ENCODE measurements at regions of chr6 and their contacts with region 1.

Region 1: DNA sequence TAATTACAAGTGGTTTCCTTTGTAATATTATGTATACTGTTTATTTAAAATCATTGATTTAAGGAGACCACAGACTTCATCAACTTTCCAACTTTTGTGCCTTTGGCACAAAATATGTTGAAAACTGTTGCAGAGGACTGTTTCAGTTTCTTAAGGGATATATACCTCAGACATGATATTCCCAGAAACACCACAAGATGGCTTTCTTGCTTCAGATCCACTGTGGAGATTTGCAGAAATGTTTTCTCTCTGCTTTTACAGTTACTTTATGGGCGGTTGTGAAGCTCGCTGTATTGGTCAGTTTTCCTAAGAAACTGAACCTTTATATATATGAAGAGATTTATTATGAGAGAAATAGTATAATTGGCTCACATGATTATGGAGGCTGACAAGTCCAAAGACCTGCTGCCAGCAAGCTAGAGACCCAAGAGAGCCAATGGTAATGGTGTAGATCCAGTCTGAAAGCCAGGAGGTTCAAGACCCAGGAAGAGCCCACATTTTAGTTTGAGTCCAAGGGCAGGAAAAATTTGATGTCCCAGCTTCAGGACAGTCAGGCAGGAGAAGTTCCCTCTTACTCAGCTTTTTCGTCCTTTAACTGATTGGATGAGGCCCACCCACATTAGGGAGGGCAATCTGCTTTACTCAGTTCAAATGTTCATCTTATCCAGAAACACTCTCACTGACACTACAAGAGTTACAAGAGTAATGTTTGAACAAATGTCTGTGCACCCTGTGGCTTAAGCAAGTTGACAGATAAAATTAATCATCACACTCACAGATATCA is 12.8 kb downstream of the ME1 start:
- DNase-seq: peak; percentile 67
- ATAC-seq: peak; percentile 78
- H3K4me3 ChIP-seq: no peak overlapping the region
- H3K27ac ChIP-seq: no peak overlapping the region
- H3K4me1 ChIP-seq: no peaks in the 10 kb centered on the region
- H3K27me3 ChIP-seq: no peaks in the 10 kb centered on the region
- CTCF ChIP-seq: peak; percentile 71

Region 2: DNA sequence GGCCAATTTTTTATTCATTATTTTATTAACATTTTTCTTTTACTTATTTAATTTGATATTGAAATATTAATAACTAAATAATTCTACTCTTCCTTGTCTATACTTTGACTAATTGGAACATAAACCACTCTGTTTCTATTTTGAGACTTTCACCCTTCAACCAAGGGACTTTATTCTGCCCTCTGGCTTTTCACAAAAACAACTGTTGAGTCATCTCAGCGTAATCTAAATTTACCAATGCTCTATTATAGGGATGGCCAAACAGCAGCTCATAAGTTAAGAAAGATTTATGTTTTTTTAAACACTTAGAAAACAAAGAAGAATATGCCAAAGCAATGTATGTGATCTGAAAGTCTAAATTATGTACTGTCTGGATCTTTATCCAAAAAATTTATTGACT is 303.9 kb before region 1 on chr6:
- CTCF ChIA-PET with region 1: no interaction called
- POLR2A ChIA-PET with region 1: no interaction called
- intact Hi-C with region 1: no loop called
- DNase-seq: no peak
- ATAC-seq: no peak
- H3K4me3 ChIP-seq: no peak overlapping the region
- H3K27ac ChIP-seq: no peak overlapping the region
- H3K4me1 ChIP-seq: no peaks in the 10 kb centered on the region
- H3K27me3 ChIP-seq: no peaks in the 10 kb centered on the region
- CTCF ChIP-seq: no peak

Region 3: GRCh38 chr6:83221889-83222479 is 196.1 kb before region 1 on chr6:
- CTCF ChIA-PET with region 1: no interaction called
- POLR2A ChIA-PET with region 1: no interaction called
- intact Hi-C with region 1: loop called (anchors 1 kb)
- DNase-seq: peak; percentile 57
- ATAC-seq: no peak
- H3K4me3 ChIP-seq: no peak overlapping the region
- H3K27ac ChIP-seq: no peak overlapping the region
- H3K4me1 ChIP-seq: peaks cover 4% of the 10 kb centered on the region
- H3K27me3 ChIP-seq: no peaks in the 10 kb centered on the region
- CTCF ChIP-seq: peak; percentile 69